ENCODE measurements at regions of chr6 and their contacts with region 1.

Region 1: DNA sequence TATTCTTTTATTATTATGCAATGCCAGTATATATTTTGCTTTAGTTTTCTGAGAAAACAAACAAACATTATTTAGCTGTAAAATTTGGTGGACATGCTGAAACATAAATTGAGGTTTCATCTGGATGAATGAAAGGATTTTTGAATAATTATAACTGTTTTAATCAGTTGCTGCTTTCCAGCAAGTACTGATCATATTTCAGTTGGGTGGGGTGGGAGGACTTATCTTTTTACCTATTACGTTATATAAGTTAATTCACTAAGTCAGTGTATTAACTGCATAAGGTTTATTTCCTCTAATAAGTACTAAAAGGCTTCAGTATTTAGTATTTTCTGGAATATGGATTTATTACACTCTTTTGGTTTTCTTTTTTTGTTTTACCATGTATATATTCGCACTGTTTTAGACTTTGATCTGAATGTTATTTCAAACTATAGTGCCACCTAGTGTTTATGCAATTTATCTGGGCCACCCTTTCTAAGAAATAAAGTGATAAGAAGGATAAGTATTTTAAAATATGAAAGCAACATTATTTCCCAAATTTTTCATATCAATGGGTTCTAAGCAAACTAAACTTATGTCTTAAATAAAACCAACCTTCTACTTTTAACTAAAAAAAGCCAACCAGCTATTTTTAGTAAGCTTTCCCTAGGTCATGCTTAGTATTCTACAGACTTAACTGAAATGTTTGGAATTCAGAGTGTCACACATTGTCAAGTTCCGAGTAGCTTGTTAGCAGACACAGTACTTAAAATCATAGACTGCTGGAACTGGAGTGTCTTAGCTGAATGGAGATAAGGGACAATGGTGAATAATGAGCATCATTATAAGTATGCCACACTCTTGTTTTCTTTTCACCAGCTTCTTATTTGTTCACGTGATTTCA is 105.4 kb upstream of the MCHR2 start:
- DNase-seq: peak; percentile 34
- H3K4me3 ChIP-seq: no peak overlapping the region
- H3K27ac ChIP-seq: no peak overlapping the region
- H3K4me1 ChIP-seq: no peaks in the 10 kb centered on the region
- CTCF ChIP-seq: peak; percentile 93

Region 2: GRCh38 chr6:99868074-99868702 is 231.2 kb before region 1 on chr6:
- CTCF ChIA-PET with region 1: no interaction called
- POLR2A ChIA-PET with region 1: interaction called, 3 read pairs
- intact Hi-C with region 1: loop called (anchors 2 kb)
- DNase-seq: peak; percentile 58
- H3K4me3 ChIP-seq: no peak overlapping the region
- H3K27ac ChIP-seq: no peak overlapping the region
- H3K4me1 ChIP-seq: no peaks in the 10 kb centered on the region
- CTCF ChIP-seq: peak; percentile 97

Region 3: DNA sequence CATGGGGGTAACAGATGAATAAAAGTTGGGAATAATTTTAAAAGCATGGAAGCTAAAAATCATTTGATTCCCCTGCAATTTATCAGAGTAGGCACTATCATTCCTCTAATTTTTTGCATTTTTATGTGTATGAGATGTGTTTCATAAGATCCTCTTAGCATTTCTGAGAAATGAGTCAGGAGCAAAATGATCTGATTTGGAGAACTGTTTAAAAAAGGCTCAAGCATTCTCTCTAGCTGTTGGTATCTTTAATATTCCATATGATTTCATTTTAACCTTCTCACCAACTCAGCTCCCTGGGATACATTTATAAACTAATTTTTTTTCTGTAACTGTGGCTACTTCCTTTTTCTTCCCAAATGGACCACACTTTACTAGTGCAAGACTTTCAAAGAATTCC is 166.3 kb before region 1 on chr6:
- CTCF ChIA-PET with region 1: no interaction called
- POLR2A ChIA-PET with region 1: no interaction called
- intact Hi-C with region 1: no loop called
- DNase-seq: no peak
- H3K4me3 ChIP-seq: no peak overlapping the region
- H3K27ac ChIP-seq: no peak overlapping the region
- H3K4me1 ChIP-seq: no peaks in the 10 kb centered on the region
- CTCF ChIP-seq: no peak

Region 4: DNA sequence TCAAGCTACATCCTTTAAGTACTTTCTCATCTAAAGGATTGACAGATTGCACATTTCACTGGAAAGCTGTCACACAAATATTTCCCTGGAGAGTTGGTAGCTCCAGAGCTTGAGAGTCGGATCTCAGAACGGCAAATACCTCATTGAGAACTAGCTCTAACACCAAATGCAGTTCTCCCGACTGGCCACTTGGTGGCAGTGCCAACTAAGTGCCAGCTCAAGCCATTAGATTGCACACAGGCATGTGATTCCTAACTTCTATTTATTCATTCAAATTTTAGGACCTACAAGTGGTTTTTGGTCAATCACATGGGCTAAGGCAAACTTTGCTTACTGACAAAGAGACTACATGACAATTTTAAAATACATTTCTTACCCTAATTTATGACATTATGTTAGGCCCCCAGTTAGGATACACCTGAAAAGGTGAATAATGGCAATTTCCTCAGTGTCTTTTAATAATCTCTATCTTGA is 97.5 kb before region 1 on chr6:
- CTCF ChIA-PET with region 1: no interaction called
- POLR2A ChIA-PET with region 1: no interaction called
- intact Hi-C with region 1: loop called (anchors 5 kb)
- DNase-seq: peak; percentile 58
- H3K4me3 ChIP-seq: no peak overlapping the region
- H3K27ac ChIP-seq: no peak overlapping the region
- H3K4me1 ChIP-seq: no peaks in the 10 kb centered on the region
- CTCF ChIP-seq: peak; percentile 93

Region 5: DNA sequence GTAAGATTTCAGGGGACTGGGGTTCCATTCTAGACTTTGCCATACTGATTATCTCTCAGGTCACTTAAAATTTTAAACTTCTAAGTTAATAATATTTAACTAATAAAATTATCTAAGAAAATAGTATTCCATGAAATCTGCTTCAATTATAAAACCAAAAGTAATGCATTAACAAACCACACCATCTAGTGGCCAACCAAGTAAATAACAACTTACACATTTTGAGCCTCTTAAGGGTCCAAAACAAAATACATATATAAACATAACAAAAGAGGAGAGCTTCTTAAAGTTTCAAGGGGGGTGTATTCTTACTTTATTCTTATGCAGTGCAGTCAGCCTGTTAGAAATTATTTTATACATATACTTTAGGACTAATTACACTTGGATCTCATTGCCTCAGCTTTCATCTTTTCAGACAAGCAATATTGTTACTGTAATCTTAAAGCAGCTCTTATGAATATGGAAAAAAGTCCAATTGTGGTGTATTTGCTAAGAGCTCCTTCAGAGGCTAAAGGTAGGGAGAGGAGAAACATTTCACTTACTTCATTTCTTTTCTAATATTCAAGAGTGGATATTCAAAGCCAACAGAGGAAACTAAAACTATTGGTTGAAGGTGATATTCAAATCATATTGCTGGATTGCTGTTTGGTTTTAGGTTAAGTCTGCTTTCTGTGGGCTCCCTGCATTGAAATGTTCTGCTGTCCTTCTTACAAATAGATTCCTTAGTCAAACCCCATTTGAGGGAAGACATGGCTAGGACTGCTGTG is 565.0 kb after region 1 on chr6:
- CTCF ChIA-PET with region 1: no interaction called
- POLR2A ChIA-PET with region 1: no interaction called
- intact Hi-C with region 1: loop called (anchors 5 kb)
- DNase-seq: peak; percentile 41
- H3K4me3 ChIP-seq: no peak overlapping the region
- H3K27ac ChIP-seq: no peak overlapping the region
- H3K4me1 ChIP-seq: no peaks in the 10 kb centered on the region
- CTCF ChIP-seq: peak; percentile 84